Activated B cell treated with CpG ODN at 0.5 μM for 24 hours (primary cell): ENCODE measurements at regions of chr6 and their contacts with region 1.

Region 1: GRCh38 chr6:157461000-157461915 is 80.3 kb downstream of the ZDHHC14 start:
- DNase-seq: peak; percentile 64
- ATAC-seq: peak; percentile 65
- H3K4me3 Mint-ChIP-seq: peak overlapping the region; percentile 67
- H3K27ac Mint-ChIP-seq: peak overlapping the region; percentile 95
- H3K4me1 Mint-ChIP-seq: peaks cover 81% of the 10 kb centered on the region
- H3K27me3 Mint-ChIP-seq: no peaks in the 10 kb centered on the region
- CTCF ChIP-seq: no peak

Region 2: DNA sequence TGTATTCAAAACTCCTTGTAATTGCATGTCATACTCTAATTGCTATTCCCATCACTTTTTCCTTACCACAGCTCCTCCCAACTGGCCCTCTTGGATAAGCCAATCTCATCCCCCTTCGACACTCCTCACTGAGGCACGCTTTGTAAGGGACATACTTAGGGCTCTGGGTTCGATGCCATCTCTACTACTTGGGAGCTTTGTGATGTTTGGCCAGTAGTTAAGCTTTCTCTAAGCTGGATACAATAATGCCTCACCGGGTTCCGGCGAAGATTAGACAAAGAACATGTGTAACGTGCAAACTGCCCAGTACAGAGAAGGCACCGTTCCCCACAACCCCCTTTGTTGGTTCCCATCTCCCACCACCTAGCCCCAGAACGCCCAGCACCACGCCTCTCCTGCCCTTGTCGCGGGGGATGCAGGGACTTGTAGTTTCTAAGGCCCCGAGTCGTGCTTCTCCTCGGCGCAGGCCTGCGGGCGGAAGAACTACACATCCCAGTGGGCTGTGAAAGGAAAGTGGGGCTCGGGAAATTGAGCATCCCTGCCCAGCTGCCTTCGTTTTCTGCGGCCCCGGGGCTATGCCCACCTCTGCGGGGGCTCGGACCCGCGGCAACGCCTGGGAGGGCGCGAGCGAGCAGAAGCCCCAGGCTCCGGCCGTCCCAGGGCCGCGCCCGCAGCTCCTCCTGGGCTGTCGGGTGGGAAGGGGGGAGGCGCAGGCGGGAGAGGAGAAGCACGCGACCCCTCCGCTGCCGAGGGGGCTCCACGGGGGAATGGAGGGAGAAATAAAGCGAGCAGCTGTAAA is 81.4 kb before region 1 on chr6:
- CTCF ChIA-PET with region 1: no interaction called
- POLR2A ChIA-PET with region 1: interaction called, 12 read pairs
- intact Hi-C with region 1: loop called (anchors 1 kb)
- DNase-seq: peak; percentile 76
- ATAC-seq: peak; percentile 77
- H3K4me3 Mint-ChIP-seq: peak overlapping the region; percentile 87
- H3K27ac Mint-ChIP-seq: peak overlapping the region; percentile 78
- H3K4me1 Mint-ChIP-seq: peaks cover 40% of the 10 kb centered on the region
- H3K27me3 Mint-ChIP-seq: peaks cover 8% of the 10 kb centered on the region
- CTCF ChIP-seq: no peak

Region 3: DNA sequence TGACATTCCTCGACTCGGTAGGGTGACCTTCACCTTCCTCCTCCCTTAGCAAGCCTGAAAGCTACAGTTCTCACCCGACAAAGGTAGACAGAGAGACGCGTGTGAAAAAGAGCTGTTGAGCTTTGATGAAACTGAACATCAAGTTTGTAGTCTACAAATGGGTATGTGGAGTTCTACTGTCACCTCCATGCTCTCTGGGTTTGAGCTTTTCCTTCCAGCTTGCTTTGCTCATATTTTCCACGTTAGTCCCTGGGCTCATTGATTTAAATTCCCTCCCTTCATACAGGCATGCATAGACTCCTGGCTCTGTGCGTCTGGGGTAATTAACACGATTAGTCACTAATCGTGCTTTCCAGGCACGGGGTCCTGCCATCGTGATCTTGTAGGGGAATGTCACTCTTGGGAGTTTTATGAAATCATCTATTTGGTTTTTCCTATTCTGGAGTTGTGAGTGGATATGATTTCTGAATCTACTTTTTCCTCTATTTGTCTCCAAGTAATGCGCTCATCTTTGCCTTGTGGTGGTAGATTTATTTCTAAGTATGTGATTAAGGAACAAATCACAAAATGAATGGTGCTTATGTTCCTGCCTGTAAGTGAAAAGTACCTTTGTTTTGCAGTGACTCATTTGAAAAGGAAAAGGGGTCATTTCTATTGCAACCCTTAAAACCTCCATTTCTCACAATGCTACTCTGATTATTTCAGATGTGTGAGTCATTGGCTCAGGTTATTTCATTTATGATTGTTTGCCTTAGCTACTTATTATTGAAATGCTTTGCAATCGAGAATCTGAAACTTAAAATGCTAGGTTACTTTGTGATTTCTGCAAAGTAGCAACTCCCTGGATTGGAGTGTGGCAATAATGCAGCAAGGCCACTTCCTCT is 74.3 kb after region 1 on chr6:
- CTCF ChIA-PET with region 1: no interaction called
- POLR2A ChIA-PET with region 1: interaction called, 9 read pairs
- intact Hi-C with region 1: loop called (anchors 2 kb)
- DNase-seq: no peak
- ATAC-seq: peak; percentile 45
- H3K4me3 Mint-ChIP-seq: peak overlapping the region; percentile 21
- H3K27ac Mint-ChIP-seq: peak overlapping the region; percentile 70
- H3K4me1 Mint-ChIP-seq: peaks cover 60% of the 10 kb centered on the region
- H3K27me3 Mint-ChIP-seq: no peaks in the 10 kb centered on the region
- CTCF ChIP-seq: no peak

Region 4: GRCh38 chr6:157579467-157580031 is 118.3 kb after region 1 on chr6:
- CTCF ChIA-PET with region 1: no interaction called
- POLR2A ChIA-PET with region 1: interaction called, 13 read pairs
- intact Hi-C with region 1: no loop called
- DNase-seq: no peak
- ATAC-seq: no peak
- H3K4me3 Mint-ChIP-seq: no peak overlapping the region
- H3K27ac Mint-ChIP-seq: no peak overlapping the region
- H3K4me1 Mint-ChIP-seq: peaks cover 51% of the 10 kb centered on the region
- H3K27me3 Mint-ChIP-seq: no peaks in the 10 kb centered on the region
- CTCF ChIP-seq: no peak

Region 5: GRCh38 chr6:157667211-157668008 is 206.2 kb after region 1 on chr6:
- CTCF ChIA-PET with region 1: interaction called, 11 read pairs
- POLR2A ChIA-PET with region 1: no interaction called
- intact Hi-C with region 1: loop called (anchors 1 kb)
- DNase-seq: no peak
- ATAC-seq: peak; percentile 84
- H3K4me3 Mint-ChIP-seq: peak overlapping the region; percentile 48
- H3K27ac Mint-ChIP-seq: peak overlapping the region; percentile 33
- H3K4me1 Mint-ChIP-seq: peaks cover 10% of the 10 kb centered on the region
- H3K27me3 Mint-ChIP-seq: no peaks in the 10 kb centered on the region
- CTCF ChIP-seq: peak; percentile 72